Heart left ventricle (tissue), 16 donors: ENCODE measurements at regions of chr18 and their contacts with region 1.

Region 1: GRCh38 chr18:21315741-21316187 is 73.7 kb downstream of the GREB1L start:
- DNase-seq: no peak
- ATAC-seq: no peak
- H3K4me3 ChIP-seq: no peak overlapping the region
- H3K27ac ChIP-seq: no peak overlapping the region
- H3K4me1 ChIP-seq: no peaks in the 10 kb centered on the region
- H3K27me3 ChIP-seq: no peaks in the 10 kb centered on the region
- CTCF ChIP-seq: no peak
- POLR2A ChIP-seq: no peak

Region 2: GRCh38 chr18:21361307-21361880 is 45.6 kb after region 1 on chr18:
- intact Hi-C with region 1: loop called in 1 of 10 experiments (anchors 10 kb)
- DNase-seq: no peak
- ATAC-seq: peak in 1 of 4 donors; percentile 41
- H3K4me3 ChIP-seq: no peak overlapping the region
- H3K27ac ChIP-seq: peak overlapping the region in 1 of 12 donors; percentile 2
- H3K4me1 ChIP-seq: peaks cover 0 to 6% (median 0%) of the 10 kb centered on the region in 12 donors
- H3K27me3 ChIP-seq: no peaks in the 10 kb centered on the region
- CTCF ChIP-seq: no peak
- POLR2A ChIP-seq: no peak

Region 3: DNA sequence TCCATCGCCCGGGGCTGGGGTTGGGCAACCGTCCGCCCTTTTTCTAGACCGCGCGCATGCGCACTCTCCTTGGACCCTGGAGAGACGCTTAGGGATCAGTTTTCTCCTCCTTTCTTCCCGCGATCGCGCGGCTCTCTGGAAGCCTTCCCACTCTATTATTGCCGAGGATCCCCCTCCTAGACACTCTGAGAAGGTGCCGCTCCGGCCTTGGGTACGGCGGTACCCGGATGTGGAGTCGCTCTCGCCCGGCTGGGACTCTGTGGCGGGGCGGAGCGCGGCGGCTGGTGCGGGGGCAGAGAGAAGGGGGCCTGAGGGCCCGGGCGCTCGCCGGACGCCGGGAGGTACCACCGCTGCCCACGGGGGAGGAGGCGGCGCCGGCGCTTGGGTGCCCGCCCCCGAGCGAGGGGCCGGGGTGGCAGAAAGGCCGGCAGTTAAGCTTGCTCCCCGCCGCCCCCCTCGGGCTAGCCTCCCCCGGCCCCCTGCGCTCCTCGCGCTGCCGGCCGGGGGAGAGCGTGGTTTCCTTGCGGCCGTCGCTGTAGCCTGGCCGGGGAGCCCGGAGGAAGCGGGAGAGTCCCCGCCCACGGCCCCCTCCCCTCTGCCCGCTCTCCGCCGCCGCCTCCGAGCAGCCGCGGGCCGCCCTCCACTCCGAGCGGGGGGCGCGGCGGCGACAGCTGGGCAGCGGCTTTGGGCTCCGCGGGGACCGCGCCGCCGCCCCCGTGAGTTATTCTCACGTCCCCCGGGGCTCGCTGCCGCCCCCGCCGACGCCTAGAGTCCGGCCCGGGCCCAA is 425.2 kb after region 1 on chr18 and contains the start of gene MIB1:
- intact Hi-C with region 1: no loop called
- DNase-seq: peak; percentile 67 to 100 (median 73)
- ATAC-seq: peak; percentile 76 to 88 (median 86)
- H3K4me3 ChIP-seq: peak within 1 kb of the TSS; percentile 71 to 96 (median 89)
- H3K27ac ChIP-seq: peak within 1 kb of the TSS; percentile 96 to 99 (median 98)
- H3K4me1 ChIP-seq: peaks cover 0 to 38% (median 18%) of the 10 kb centered on the region in 12 donors
- H3K27me3 ChIP-seq: no peaks in the 10 kb centered on the region
- CTCF ChIP-seq: no peak
- POLR2A ChIP-seq: peak in 1 of 2 donors; percentile 74
- total RNA-seq, gene MIB1: 15.3 to 33.4 (median 24.0) TPM